Breast epithelium (tissue), 4 donors: ENCODE measurements at regions of chr6 and their contacts with region 1.

Region 1: GRCh38 chr6:112931832-112932231 is 584.7 kb downstream of the RFPL4B start:
- DNase-seq: no peak
- H3K4me3 ChIP-seq: no peak overlapping the region
- H3K27ac ChIP-seq: no peak overlapping the region
- H3K4me1 ChIP-seq: no peaks in the 10 kb centered on the region
- H3K27me3 ChIP-seq: no peaks in the 10 kb centered on the region
- CTCF ChIP-seq: no peak
- POLR2A ChIP-seq: no peak

Region 2: DNA sequence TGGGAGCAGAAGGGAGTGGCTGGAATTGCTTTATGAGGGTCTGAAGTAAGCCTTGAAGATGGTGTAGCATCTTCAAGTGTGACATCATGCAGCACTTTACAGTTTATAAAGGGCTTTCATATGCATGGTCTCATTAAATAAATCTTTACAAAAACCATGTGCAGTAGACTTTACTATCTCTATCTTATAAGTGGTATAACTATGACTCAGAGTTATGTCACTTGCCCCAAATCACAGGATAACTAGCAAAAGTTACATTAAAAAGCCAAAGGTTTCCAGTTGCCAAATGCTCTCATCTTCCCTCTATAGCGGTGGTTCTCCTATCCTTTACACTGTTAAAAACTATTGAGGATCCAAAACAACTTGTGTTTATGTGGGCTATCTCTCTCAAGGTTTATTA is 237.7 kb after region 1 on chr6:
- intact Hi-C with region 1: no loop called
- DNase-seq: no peak
- H3K4me3 ChIP-seq: no peak overlapping the region
- H3K27ac ChIP-seq: no peak overlapping the region
- H3K4me1 ChIP-seq: no peaks in the 10 kb centered on the region
- H3K27me3 ChIP-seq: no peaks in the 10 kb centered on the region
- CTCF ChIP-seq: no peak
- POLR2A ChIP-seq: no peak

Region 3: GRCh38 chr6:113402544-113402943 is 470.7 kb after region 1 on chr6:
- intact Hi-C with region 1: loop called (anchors 5 kb)
- DNase-seq: no peak
- H3K4me3 ChIP-seq: no peak overlapping the region
- H3K27ac ChIP-seq: no peak overlapping the region
- H3K4me1 ChIP-seq: no peaks in the 10 kb centered on the region
- H3K27me3 ChIP-seq: no peaks in the 10 kb centered on the region
- CTCF ChIP-seq: no peak
- POLR2A ChIP-seq: no peak